ENCODE measurements at regions of chr2 and their contacts with region 1.

Region 1: GRCh38 chr2:28475088-28475605 is 20.7 kb upstream of the PLB1 start:
- DNase-seq: no peak
- H3K4me3 ChIP-seq: no peak overlapping the region
- H3K27ac ChIP-seq: no peak overlapping the region
- H3K4me1 ChIP-seq: peaks cover 16% of the 10 kb centered on the region
- H3K27me3 ChIP-seq: no peaks in the 10 kb centered on the region
- CTCF ChIP-seq: no peak

Region 2: DNA sequence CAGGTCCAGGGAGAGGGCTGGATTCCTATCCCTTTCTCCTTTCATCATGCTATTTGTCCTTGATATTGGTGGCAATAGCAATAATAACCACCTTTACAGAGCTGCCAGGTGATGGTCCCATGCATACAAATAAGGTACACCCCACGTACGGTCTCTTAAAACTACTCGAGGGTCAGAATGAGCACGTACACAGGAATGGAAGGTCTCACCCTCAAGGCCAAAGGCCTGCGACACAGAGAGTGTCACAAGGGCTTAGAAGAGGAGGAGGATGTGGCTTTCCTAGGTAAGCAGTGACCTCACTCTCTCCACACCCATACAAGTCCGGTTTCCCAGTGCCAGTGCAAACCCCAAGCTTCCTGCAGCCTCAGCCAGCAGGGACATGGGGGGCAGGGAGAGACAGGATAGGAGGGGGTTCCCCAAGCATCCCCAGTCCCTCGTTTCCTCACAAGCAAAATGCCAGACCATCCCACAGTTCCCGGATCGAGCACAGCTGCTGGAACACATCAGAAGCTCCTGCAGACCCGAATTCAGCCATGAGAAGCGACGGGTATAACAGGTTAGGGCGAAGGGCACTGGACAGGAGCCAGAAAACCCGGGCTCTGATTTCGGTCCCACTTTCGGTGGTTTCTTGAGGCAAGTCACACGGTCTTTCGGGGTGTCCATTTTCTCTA is 69.9 kb after region 1 on chr2:
- CTCF ChIA-PET with region 1: no interaction called
- dilution Hi-C with region 1: loop called (anchors 5 kb)
- in situ Hi-C with region 1: no loop called
- intact Hi-C with region 1: no loop called
- DNase-seq: peak; percentile 53
- H3K4me3 ChIP-seq: no peak overlapping the region
- H3K27ac ChIP-seq: no peak overlapping the region
- H3K4me1 ChIP-seq: peaks cover 25% of the 10 kb centered on the region
- H3K27me3 ChIP-seq: no peaks in the 10 kb centered on the region
- CTCF ChIP-seq: no peak